ENCODE measurements at regions of chr4 and their contacts with region 1.

Region 1: DNA sequence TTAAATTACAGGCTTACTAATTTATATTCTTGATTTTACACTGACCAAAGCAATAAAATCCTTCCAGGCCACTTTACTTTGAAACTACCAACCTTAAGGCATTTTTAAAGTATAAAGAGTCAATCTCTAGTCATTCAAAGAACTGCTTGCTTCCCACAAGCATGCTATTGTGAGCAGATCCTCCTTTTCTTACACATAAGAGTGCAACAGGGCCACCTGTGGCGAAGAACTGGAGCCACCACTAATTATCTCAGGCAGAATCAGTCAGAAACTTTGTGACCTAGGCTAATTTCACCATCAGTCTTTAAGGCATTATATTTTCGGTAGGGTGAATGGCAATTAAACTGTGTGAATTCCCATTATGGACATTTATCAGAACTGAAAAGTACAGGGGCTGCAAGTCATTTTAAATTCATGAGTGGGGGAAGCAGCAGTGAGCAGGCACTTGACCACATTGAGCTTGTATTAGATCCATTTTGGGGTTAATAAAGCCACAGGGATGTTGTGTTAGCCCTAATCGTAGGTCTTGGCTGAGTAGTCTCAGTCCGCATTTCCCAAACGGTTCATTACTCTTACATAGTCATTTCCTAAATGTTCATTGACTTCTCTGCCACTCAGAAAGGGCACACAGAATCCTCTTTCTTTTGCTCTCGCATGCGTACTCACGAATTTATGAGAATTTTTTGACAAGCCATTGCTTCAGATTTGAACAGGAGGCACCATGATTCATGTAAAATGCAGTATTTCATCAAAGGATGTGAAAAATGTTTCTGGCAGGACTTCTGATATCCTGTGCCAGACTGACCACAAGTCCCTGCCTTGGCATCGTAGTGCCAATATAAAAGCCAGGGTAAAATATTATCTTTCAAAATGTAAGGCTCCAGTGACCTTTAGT is 39.8 kb downstream of the NPY2R start:
- DNase-seq: peak; percentile 91
- ATAC-seq: peak; percentile 61
- H3K4me3 ChIP-seq: peak overlapping the region; percentile 57
- H3K27ac ChIP-seq: peak overlapping the region; percentile 99
- H3K4me1 ChIP-seq: peaks cover 27% of the 10 kb centered on the region
- H3K27me3 ChIP-seq: no peaks in the 10 kb centered on the region
- CTCF ChIP-seq: peak; percentile 37; the same call in 1 of the 2 replicates

Region 2: DNA sequence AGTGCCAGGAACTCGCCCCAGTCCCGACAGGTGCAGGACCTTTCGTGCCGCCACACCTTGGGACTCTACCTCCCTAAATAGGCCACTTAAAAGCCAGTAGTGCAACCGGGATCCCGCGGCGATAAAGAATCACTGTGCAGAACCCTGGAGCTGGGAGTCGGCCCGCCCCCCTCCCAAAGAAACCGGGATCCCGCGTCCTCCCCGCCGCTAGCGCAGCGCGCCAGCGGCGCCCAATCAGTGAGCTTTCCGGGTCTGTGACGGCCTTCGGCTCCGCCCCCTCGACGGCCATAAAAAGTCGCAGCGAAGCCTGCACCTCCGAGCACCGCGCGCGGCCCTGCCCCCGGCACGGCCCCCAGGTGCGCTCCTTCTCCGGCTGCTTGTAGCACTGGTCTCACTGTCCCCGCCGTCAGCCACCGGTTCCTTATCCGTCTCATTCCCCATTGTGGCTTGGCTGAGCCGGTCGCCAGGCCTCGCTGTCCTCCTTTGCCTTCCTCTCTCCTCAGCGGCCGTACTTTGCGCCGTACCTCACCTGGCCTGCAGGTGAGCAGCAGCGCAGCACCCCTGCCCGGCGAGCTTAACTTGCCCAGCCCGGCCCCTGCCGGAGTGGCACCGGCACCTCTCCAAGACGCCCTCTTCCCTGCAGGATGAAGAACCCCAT is 504.4 kb before region 1 on chr4 and contains the start of gene LRAT:
- CTCF ChIA-PET with region 1: no interaction called
- POLR2A ChIA-PET with region 1: no interaction called
- intact Hi-C with region 1: no loop called
- DNase-seq: peak; percentile 72
- ATAC-seq: peak; percentile 93
- H3K4me3 ChIP-seq: peak within 1 kb of the TSS; percentile 80
- H3K27ac ChIP-seq: no peak within 1 kb of the TSS
- H3K4me1 ChIP-seq: peaks cover 7% of the 10 kb centered on the region
- H3K27me3 ChIP-seq: no peaks in the 10 kb centered on the region
- CTCF ChIP-seq: peak; percentile 25; the same call in 1 of the 2 replicates
- total RNA-seq, gene LRAT: 0.55 and 0.92 TPM in 2 replicates

Region 3: DNA sequence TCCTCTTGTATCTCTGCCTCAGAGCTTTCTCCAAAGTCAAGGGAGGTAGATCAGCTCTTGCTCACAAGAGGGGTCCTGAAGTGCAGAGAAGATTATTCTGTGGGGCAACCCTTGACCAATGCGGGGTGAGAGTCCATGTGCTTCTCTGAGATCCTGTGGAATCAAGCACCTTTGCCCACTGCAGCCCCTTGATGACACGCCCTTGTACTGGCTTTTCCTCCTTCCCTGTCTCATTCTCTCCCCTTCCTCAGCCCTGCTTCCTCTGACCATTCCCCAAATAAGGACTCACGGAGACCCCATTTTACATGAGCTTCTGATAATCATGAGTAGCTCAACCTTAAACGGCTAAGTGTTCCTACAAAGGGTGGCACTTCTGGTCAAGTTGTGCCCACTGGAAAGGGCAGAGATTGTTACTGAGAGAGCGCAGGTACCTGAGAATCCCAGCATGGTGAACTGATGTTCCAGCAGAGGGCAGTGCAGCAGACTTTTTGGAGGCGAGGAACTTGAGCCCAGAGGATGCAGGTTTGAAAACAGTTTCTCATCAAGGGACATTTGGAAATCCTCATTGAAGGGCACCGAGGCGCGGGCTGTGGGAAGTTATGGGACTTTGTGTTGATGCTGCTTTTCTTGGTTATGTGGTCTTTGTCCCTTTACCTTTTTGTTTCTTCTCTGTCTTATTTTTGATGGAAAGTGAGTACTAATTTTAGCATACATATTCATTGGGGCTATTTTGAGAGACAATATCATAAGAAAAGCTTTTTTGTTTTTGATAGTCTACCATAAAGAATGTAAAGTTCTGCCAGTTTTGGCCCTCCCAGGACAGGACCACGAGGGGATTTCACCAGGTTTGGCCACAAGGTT is 265.8 kb before region 1 on chr4:
- CTCF ChIA-PET with region 1: no interaction called
- POLR2A ChIA-PET with region 1: no interaction called
- intact Hi-C with region 1: loop called (anchors 5 kb)
- DNase-seq: peak; percentile 69
- ATAC-seq: peak; percentile 88
- H3K4me3 ChIP-seq: no peak overlapping the region
- H3K27ac ChIP-seq: no peak overlapping the region
- H3K4me1 ChIP-seq: no peaks in the 10 kb centered on the region
- H3K27me3 ChIP-seq: no peaks in the 10 kb centered on the region
- CTCF ChIP-seq: peak; percentile 81

Region 4: GRCh38 chr4:155207534-155208257 is 40.6 kb before region 1 on chr4:
- CTCF ChIA-PET with region 1: no interaction called
- POLR2A ChIA-PET with region 1: no interaction called
- intact Hi-C with region 1: loop called (anchors 2 kb)
- DNase-seq: peak; percentile 64
- ATAC-seq: peak; percentile 89
- H3K4me3 ChIP-seq: peak overlapping the region; percentile 68
- H3K27ac ChIP-seq: no peak overlapping the region
- H3K4me1 ChIP-seq: no peaks in the 10 kb centered on the region; the same call in 1 of the 2 replicates
- H3K27me3 ChIP-seq: peaks cover 22% of the 10 kb centered on the region; the same call in 1 of the 2 replicates
- CTCF ChIP-seq: peak; percentile 47

Region 5: DNA sequence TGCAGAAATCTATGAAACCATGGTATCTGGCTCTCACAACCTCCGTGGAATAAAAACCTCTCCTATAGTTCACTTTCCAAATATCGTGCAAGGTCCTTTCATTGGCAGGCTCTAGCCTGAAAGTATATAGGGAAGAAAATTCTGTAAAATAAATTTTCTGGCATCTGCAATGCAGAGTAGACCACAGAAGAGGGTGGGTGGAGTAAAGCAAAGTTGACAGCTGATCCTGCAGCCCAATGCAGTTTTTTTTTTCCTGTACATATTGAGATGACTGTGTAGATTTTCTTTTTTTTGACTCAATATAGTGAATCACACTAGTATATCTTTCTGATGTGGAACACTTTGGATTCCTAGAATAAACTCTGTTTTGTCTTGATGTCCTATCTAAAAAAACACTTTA is 16.9 kb after region 1 on chr4:
- CTCF ChIA-PET with region 1: no interaction called
- POLR2A ChIA-PET with region 1: no interaction called
- intact Hi-C with region 1: loop called (anchors 1 kb)
- DNase-seq: no peak
- ATAC-seq: peak; percentile 29; the same call in 1 of the 2 replicates
- H3K4me3 ChIP-seq: no peak overlapping the region
- H3K27ac ChIP-seq: no peak overlapping the region
- H3K4me1 ChIP-seq: no peaks in the 10 kb centered on the region; the same call in 1 of the 2 replicates
- H3K27me3 ChIP-seq: no peaks in the 10 kb centered on the region
- CTCF ChIP-seq: no peak

Region 6: DNA sequence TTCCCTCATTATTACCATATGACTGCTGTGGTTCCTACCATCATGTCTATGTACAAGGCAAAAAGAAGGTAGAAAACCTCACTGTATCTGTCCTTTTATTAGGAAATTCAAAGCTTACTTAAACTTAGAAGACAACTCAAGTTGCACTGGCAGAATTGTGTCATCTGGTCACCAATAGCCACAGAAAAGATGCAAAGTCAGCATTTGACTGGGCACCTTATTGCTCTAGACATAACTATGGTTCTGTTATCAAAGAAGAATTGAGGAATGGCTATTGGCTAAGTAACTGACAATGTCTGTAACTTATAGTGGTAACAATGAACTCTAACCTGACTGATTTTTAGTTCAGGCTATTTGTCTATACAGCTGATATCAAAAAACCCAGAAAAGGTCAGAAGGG is 83.2 kb after region 1 on chr4:
- CTCF ChIA-PET with region 1: no interaction called
- POLR2A ChIA-PET with region 1: no interaction called
- intact Hi-C with region 1: no loop called
- DNase-seq: no peak
- ATAC-seq: no peak
- H3K4me3 ChIP-seq: no peak overlapping the region
- H3K27ac ChIP-seq: no peak overlapping the region
- H3K4me1 ChIP-seq: no peaks in the 10 kb centered on the region
- H3K27me3 ChIP-seq: no peaks in the 10 kb centered on the region
- CTCF ChIP-seq: no peak

Region 7: GRCh38 chr4:155342142-155342541 is 93.9 kb after region 1 on chr4:
- CTCF ChIA-PET with region 1: no interaction called
- POLR2A ChIA-PET with region 1: no interaction called
- intact Hi-C with region 1: loop called (anchors 1 kb)
- DNase-seq: peak; percentile 87
- ATAC-seq: peak; percentile 83
- H3K4me3 ChIP-seq: peak overlapping the region; percentile 22; the same call in 1 of the 2 replicates
- H3K27ac ChIP-seq: peak overlapping the region; percentile 95
- H3K4me1 ChIP-seq: peaks cover 26% of the 10 kb centered on the region
- H3K27me3 ChIP-seq: no peaks in the 10 kb centered on the region
- CTCF ChIP-seq: no peak